ENCODE measurements at regions of chr5 and their contacts with region 1.

Region 1: GRCh38 chr5:13987843-13988464 is 43.5 kb upstream of the DNAH5 start:
- DNase-seq: peak; percentile 70
- H3K4me3 Mint-ChIP-seq: no peak overlapping the region
- H3K27ac Mint-ChIP-seq: peak overlapping the region; percentile 48
- H3K4me1 Mint-ChIP-seq: peaks cover 40% of the 10 kb centered on the region
- H3K27me3 Mint-ChIP-seq: no peaks in the 10 kb centered on the region
- CTCF ChIP-seq: peak; percentile 76

Region 2: DNA sequence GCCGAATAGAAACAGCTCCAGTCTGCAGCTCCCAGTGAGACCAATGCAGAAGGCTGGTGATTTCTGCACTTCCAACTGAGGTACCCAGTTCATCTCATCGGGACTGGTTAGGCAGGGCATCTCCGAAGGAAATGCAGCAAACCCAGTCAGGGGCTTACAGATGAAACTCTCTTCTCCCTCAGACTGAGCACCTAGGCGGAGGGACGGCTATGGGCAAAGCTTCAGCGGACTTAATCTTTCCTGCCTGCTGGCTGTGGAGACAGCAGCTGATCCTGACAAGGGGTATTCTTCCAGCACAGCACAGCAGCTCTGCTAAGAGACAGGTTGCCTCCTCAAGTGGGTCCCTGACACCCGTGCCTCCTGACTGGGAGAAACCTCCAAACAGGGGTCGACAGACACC is 374.3 kb before region 1 on chr5:
- CTCF ChIA-PET with region 1: no interaction called
- intact Hi-C with region 1: no loop called
- DNase-seq: no peak
- H3K4me3 Mint-ChIP-seq: no peak overlapping the region
- H3K27ac Mint-ChIP-seq: no peak overlapping the region
- H3K4me1 Mint-ChIP-seq: peaks cover 14% of the 10 kb centered on the region
- H3K27me3 Mint-ChIP-seq: no peaks in the 10 kb centered on the region
- CTCF ChIP-seq: no peak

Region 3: DNA sequence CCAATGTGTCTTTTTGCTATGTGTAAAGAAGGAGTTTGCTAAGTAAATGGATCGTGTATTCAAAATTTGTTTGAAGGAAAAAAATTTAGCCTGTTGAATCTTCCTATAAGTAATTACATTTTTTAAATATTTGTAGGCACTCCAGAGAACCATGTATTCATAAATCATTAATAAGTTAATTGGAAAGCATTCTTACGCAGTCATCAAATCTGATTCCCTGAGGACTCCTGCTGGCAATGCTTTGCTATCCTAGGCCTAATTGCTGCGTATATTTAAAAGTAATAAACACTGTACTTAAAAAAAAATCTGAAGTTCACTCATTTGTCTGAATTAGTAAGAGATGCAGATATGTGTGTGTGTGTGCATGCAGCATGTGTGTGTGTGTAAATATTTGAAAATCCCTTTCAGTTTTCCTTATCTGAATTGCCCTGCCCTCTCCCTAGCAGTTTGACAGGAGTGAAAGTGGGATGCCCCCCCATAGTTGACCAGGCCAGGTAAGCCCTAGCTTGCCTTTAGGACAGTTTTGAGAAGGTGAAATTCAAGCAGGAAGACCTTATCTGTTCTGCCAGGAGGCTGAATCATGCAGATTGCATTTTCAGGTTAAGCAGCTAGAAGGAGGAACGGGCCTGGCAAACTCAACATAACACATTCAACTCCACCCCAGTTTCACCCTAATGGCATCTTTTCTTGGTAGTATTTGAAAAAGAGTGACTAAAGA is 37.8 kb after region 1 on chr5:
- CTCF ChIA-PET with region 1: no interaction called
- intact Hi-C with region 1: loop called (anchors 1 kb)
- DNase-seq: peak; percentile 45
- H3K4me3 Mint-ChIP-seq: peak overlapping the region; percentile 28
- H3K27ac Mint-ChIP-seq: peak overlapping the region; percentile 54
- H3K4me1 Mint-ChIP-seq: peaks cover 57% of the 10 kb centered on the region
- H3K27me3 Mint-ChIP-seq: no peaks in the 10 kb centered on the region
- CTCF ChIP-seq: no peak

Region 4: DNA sequence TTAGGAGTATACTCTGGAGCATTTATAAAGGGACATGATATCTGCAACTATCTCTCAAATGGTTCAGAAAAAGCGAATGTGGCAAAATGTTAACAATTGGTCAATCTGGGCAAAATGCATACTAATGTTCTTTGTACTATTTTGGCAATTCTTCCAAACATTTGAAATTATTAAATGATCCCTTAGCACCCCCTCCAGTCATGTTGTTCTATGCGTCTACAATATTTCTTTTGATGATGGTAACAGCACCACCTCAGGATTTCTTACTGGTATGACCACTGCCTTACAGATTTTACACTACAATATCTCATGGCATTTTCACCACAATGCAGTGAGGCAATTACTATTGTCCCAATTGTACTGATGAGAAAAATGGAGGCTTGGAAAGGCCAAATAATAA is 102.3 kb after region 1 on chr5:
- CTCF ChIA-PET with region 1: no interaction called
- intact Hi-C with region 1: loop called (anchors 5 kb)
- DNase-seq: no peak
- H3K4me3 Mint-ChIP-seq: no peak overlapping the region
- H3K27ac Mint-ChIP-seq: no peak overlapping the region
- H3K4me1 Mint-ChIP-seq: no peaks in the 10 kb centered on the region
- H3K27me3 Mint-ChIP-seq: no peaks in the 10 kb centered on the region
- CTCF ChIP-seq: no peak

Region 5: GRCh38 chr5:14144586-14145434 is 156.9 kb after region 1 on chr5:
- CTCF ChIA-PET with region 1: interaction called, 4 read pairs
- intact Hi-C with region 1: loop called (anchors 5 kb)
- DNase-seq: peak; percentile 66
- H3K4me3 Mint-ChIP-seq: peak overlapping the region; percentile 81
- H3K27ac Mint-ChIP-seq: peak overlapping the region; percentile 84
- H3K4me1 Mint-ChIP-seq: peaks cover 38% of the 10 kb centered on the region
- H3K27me3 Mint-ChIP-seq: no peaks in the 10 kb centered on the region
- CTCF ChIP-seq: no peak

Region 6: DNA sequence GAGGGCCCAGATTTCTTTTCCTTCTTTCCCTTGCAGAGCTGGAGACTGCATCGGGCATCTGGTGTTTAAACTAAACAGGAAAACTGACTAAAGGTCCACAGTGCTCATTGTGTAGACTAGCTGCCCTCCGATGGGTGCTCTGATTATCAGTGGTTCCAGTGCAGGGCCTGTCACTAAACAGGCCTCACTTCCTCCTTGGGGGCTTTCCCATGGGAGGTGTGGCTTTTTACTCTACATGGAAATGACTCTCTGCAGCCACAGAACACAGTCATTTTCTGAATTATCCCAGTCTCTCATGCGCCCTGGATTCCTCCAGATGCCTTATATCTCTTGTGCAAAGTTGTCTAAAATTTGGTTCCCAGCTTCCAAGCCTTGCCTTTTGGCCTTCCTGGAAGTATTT is 354.4 kb after region 1 on chr5:
- CTCF ChIA-PET with region 1: no interaction called
- intact Hi-C with region 1: loop called (anchors 5 kb)
- DNase-seq: peak; percentile 39
- H3K4me3 Mint-ChIP-seq: no peak overlapping the region
- H3K27ac Mint-ChIP-seq: peak overlapping the region; percentile 44
- H3K4me1 Mint-ChIP-seq: peaks cover 21% of the 10 kb centered on the region
- H3K27me3 Mint-ChIP-seq: no peaks in the 10 kb centered on the region
- CTCF ChIP-seq: no peak